ENCODE measurements at regions of chr3 and their contacts with region 1.

Region 1: GRCh38 chr3:99817437-99818240 is at the start of gene CMSS1:
- DNase-seq: peak; percentile 96
- H3K4me3 Mint-ChIP-seq: peak within 1 kb of the TSS; percentile 84
- H3K27ac Mint-ChIP-seq: peak within 1 kb of the TSS; percentile 92
- H3K4me1 Mint-ChIP-seq: peaks cover 35% of the 10 kb centered on the region
- H3K27me3 Mint-ChIP-seq: no peaks in the 10 kb centered on the region
- total RNA-seq, gene CMSS1: 95.6 to 97.2 TPM

Region 2: DNA sequence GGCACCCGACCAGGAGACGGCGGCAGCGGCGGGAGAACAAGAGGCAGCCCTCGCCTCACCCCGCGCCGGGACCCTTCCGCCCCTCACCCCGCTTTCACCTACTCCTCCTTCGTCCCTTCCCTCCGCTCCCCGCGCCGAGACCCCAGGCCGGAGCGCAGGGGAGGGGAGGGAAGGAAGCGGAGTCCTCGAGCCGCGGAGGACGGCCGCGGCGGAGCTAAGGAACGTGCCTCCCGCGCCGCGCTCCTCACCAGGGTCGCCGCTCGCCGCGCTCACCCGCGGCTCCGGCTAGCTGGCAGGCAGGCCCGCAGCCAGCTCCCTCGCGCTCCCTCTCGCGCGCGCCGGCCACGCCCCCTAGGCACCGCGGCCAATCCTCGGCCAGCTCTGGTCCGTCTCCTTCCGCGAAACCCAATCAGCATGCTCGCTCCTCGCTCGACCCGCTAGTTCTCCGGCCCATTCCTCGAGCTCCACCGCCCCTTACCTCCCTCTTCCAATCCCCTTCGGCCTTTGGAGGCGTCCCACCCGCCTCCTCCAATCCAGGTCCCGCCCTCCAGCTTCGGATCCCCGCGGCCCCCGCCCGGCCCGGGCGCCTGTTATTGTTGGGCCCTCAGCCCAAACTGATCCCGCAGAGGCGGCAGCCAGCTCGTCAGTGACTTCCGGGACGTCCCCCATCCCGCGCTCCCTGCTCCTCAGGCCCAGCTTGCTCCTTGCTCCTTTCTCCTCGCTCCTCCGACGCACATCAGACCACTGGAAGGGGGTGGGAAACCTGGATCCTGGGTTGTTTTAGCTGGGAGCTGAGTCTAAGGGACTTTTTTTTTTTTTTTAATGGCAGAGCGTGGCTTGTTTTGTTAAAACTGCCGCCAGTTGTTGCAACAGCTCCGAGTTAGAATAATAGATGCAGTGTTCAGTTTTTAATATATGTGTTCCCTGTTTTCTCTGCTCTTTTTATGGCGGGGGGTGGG is 916.0 kb before region 1 on chr3 and contains the start of gene DCBLD2:
- CTCF ChIA-PET with region 1: no interaction called
- POLR2A ChIA-PET with region 1: no interaction called
- intact Hi-C with region 1: loop called (anchors 1 kb)
- DNase-seq: peak; percentile 95
- H3K4me3 Mint-ChIP-seq: peak within 1 kb of the TSS; percentile 78
- H3K27ac Mint-ChIP-seq: no peak within 1 kb of the TSS
- H3K4me1 Mint-ChIP-seq: peaks cover 11% of the 10 kb centered on the region
- H3K27me3 Mint-ChIP-seq: peaks cover 5% of the 10 kb centered on the region
- total RNA-seq, gene DCBLD2: 1.2 to 1.6 TPM

Region 3: GRCh38 chr3:99520513-99520912 is 297.1 kb before region 1 on chr3:
- CTCF ChIA-PET with region 1: no interaction called
- POLR2A ChIA-PET with region 1: no interaction called
- intact Hi-C with region 1: no loop called
- DNase-seq: no peak
- H3K4me3 Mint-ChIP-seq: no peak overlapping the region
- H3K27ac Mint-ChIP-seq: no peak overlapping the region
- H3K4me1 Mint-ChIP-seq: no peaks in the 10 kb centered on the region
- H3K27me3 Mint-ChIP-seq: no peaks in the 10 kb centered on the region

Region 4: DNA sequence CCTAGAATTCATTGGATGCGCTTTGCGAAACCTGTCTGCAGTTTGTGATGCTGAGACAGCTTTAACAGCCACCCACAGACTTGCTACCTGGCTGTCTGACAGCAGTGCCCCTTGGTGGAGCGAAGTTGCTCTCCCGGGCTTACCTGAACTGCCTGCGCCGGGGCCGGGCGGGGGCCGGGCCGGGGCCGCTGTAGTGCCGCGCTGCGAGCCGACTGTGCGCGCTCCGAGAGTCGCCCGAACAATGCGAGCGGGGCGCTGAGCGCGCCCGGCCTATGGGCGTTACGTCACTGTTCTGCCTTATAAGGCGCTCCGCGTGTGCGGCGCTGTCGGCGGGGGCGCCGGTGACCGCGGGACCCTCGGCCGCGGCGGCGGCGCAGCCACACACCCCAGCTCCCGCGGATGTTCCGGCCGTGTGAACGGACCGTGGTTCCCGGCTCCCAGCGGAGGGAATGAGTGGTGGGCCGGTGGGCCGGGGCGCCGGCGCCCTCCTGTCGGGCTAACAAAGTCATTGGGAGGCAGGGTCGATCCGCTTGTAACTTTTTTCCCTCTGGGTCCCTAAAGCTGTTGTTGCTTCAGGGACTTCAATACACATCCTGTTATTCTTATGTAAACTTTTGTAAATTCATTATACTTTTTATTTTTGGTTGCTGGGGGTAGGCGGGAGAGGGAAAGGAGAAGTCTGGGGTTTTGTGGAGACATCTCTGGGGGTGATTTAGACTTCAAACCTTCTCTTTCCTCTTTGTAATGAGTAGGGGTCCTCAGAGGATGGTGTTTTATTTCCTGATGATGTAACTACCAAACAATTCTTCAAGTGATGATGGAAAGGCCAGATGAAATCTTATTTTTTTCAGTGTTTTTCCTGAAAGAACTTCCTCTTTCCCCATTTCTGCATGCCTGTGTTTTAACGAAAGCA is 58.5 kb after region 1 on chr3:
- CTCF ChIA-PET with region 1: no interaction called
- POLR2A ChIA-PET with region 1: no interaction called
- intact Hi-C with region 1: loop called (anchors 1 kb)
- DNase-seq: peak; percentile 73
- H3K4me3 Mint-ChIP-seq: peak overlapping the region; percentile 65
- H3K27ac Mint-ChIP-seq: no peak overlapping the region
- H3K4me1 Mint-ChIP-seq: peaks cover 27% of the 10 kb centered on the region
- H3K27me3 Mint-ChIP-seq: peaks cover 2% of the 10 kb centered on the region

Region 5: GRCh38 chr3:100260685-100261484 is 443.2 kb after region 1 on chr3 and contains the start of gene TBC1D23:
- CTCF ChIA-PET with region 1: no interaction called
- POLR2A ChIA-PET with region 1: interaction called, 3 read pairs
- intact Hi-C with region 1: loop called (anchors 1 kb)
- DNase-seq: peak; percentile 99
- H3K4me3 Mint-ChIP-seq: peak within 1 kb of the TSS; percentile 92
- H3K27ac Mint-ChIP-seq: peak within 1 kb of the TSS; percentile 85
- H3K4me1 Mint-ChIP-seq: peaks cover 52% of the 10 kb centered on the region
- H3K27me3 Mint-ChIP-seq: no peaks in the 10 kb centered on the region
- total RNA-seq, gene TBC1D23: 17.8 to 22.7 TPM